Endothelial cell of umbilical vein (primary cell): ENCODE measurements at regions of chr18 and their contacts with region 1.

Region 1: DNA sequence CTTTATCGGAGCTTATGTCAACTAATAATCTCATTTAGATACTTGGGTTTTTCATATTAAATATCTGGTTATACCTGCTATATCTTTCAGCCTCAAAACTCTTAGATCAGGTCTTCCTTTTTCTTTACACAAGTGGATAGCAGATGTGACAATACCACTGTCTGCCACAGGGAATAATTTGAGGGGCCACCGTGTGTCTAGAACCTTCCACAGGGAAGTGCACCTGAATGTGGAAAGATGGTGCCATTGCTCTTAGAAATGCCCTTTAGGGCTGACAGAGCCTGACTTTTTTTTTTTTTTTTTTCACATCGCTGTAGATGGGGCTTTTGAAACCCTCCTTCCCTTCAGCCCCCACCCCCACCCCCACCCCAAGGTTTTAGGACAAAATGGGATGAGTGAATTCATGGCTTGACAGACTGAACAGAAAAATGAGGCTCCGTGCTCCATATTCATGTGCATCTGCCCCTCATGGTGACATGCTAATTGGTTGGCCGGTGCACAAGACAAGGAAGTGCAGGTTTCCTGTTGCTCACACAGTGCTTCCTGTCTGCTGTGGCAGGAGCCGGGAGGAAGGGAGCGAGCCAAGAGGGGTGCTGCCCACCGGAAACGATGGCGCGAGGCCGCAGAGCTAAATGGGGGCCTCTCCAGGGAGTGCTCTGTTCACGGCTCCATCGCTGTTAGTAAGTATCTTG is 246.0 kb downstream of the LDLRAD4 start:
- DNase-seq: peak; percentile 94
- H3K4me3 ChIP-seq: peak overlapping the region in 1 of 3 experiments; percentile 39
- H3K27ac ChIP-seq: peak overlapping the region; percentile 98
- H3K4me1 ChIP-seq: peaks cover 24% of the 10 kb centered on the region
- H3K27me3 ChIP-seq: no peaks in the 10 kb centered on the region
- CTCF ChIP-seq: no peak
- POLR2A ChIP-seq: peak; percentile 54

Region 2: GRCh38 chr18:13268158-13269012 is 196.2 kb before region 1 on chr18:
- CTCF ChIA-PET with region 1: no interaction called
- POLR2A ChIA-PET with region 1: no interaction called
- dilution Hi-C with region 1: no loop called
- intact Hi-C with region 1: loop called (anchors 10 kb)
- DNase-seq: peak; percentile 65
- H3K4me3 ChIP-seq: no peak overlapping the region
- H3K27ac ChIP-seq: no peak overlapping the region
- H3K4me1 ChIP-seq: peaks cover 18% of the 10 kb centered on the region
- H3K27me3 ChIP-seq: peaks cover 0 to 4% of the 10 kb centered on the region in 2 experiments
- CTCF ChIP-seq: no peak
- POLR2A ChIP-seq: no peak

Region 3: DNA sequence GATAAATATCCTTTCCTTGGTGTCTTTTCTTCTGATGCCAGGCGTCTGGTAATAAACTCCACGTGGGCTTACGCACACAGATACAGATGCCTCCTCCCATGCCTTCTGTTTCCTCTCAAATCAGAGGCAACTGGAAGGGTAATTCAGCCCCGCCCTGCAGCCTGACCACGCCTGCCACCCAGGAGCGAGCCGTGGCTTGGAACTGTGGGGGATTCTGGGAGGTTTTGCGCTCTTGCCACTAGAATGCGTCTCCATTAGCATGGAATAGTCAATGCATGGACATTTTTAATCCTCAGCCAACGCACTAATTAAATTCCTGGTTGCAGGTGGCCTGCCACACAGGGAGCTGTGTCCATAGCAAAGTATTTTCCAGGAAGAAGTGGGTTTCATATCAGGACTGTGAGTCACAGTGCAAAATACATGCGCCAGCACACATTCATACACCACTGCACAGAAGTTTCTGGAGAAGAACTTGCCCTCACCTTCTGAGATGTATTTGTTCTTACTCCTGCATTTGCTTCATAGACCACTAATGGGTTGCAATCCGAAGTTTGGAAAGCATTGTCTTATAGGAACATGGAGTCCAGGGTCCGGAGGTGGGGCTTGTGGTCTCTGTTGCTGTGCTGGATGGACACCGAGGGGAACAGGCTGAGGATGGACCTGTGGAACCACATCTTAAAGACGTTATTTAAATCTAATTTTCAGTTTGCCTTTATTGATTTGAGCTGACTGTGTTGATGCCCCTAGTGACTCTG is 94.6 kb before region 1 on chr18:
- CTCF ChIA-PET with region 1: no interaction called
- POLR2A ChIA-PET with region 1: no interaction called
- dilution Hi-C with region 1: no loop called
- intact Hi-C with region 1: no loop called
- DNase-seq: no peak
- H3K4me3 ChIP-seq: no peak overlapping the region
- H3K27ac ChIP-seq: no peak overlapping the region
- H3K4me1 ChIP-seq: peaks cover 6% of the 10 kb centered on the region
- H3K27me3 ChIP-seq: no peaks in the 10 kb centered on the region
- CTCF ChIP-seq: no peak
- POLR2A ChIP-seq: no peak

Region 4: GRCh38 chr18:13435596-13436327 is 28.8 kb before region 1 on chr18:
- CTCF ChIA-PET with region 1: no interaction called
- POLR2A ChIA-PET with region 1: no interaction called
- dilution Hi-C with region 1: no loop called
- intact Hi-C with region 1: loop called (anchors 1 kb)
- DNase-seq: peak; percentile 91
- H3K4me3 ChIP-seq: no peak overlapping the region
- H3K27ac ChIP-seq: peak overlapping the region; percentile 90
- H3K4me1 ChIP-seq: peaks cover 35% of the 10 kb centered on the region
- H3K27me3 ChIP-seq: no peaks in the 10 kb centered on the region
- CTCF ChIP-seq: no peak
- POLR2A ChIP-seq: no peak

Region 5: DNA sequence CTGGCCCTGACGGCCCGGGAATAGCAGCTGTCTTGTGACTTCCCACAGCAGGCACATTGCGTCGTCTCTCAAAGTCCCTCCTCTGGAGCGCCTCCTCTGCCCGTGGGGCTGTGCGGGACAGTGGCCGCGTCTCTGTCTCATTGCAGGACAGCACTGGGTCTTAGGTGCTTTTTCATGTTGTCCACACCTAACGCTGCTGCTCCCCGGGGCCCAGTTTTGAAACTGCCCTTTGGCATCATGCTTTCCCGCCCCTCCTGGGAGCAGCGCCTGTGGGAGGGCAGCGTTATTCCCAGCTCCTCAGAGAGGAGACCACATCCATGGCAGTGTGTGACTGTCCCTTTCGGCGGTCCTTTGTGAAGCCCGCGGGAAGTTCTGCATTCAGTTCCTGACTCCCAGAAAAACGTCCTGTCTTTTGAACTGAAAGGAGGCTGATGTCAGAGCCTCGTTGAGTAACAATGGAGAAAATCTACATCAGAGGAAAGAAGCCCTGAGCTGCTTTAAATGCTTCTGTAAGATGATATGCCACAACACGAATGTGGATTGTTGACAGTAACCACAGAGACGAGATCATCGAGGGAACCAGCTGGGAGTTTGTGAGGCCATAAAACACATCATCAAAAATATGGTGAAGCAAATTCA is 35.8 kb after region 1 on chr18:
- CTCF ChIA-PET with region 1: interaction called, 5 read pairs
- POLR2A ChIA-PET with region 1: no interaction called
- dilution Hi-C with region 1: no loop called
- intact Hi-C with region 1: loop called (anchors 1 kb)
- DNase-seq: peak; percentile 83
- H3K4me3 ChIP-seq: no peak overlapping the region
- H3K27ac ChIP-seq: peak overlapping the region; percentile 57
- H3K4me1 ChIP-seq: peaks cover 29% of the 10 kb centered on the region
- H3K27me3 ChIP-seq: peaks cover 0 to 2% of the 10 kb centered on the region in 2 experiments
- CTCF ChIP-seq: no peak
- POLR2A ChIP-seq: no peak

Region 6: GRCh38 chr18:13726232-13726971 is 261.8 kb after region 1 on chr18 and contains the starts of genes FAM210A and RNMT:
- CTCF ChIA-PET with region 1: no interaction called
- POLR2A ChIA-PET with region 1: no interaction called
- dilution Hi-C with region 1: no loop called
- intact Hi-C with region 1: loop called (anchors 10 kb)
- DNase-seq: peak; percentile 97
- H3K4me3 ChIP-seq: peak within 1 kb of the TSS; percentile 78 to 98 (median 94)
- H3K27ac ChIP-seq: peak within 1 kb of the TSS; percentile 87
- H3K4me1 ChIP-seq: peaks cover 19% of the 10 kb centered on the region
- H3K27me3 ChIP-seq: no peaks in the 10 kb centered on the region
- CTCF ChIP-seq: no peak
- POLR2A ChIP-seq: peak; percentile 79
- total RNA-seq, gene FAM210A: 14.6 and 17.3 TPM in 2 replicates
- total RNA-seq, gene RNMT: 24.4 and 29.5 TPM in 2 replicates